HEK293T (cell line): ENCODE measurements at regions of chr14 and their contacts with region 1.

Region 1: DNA sequence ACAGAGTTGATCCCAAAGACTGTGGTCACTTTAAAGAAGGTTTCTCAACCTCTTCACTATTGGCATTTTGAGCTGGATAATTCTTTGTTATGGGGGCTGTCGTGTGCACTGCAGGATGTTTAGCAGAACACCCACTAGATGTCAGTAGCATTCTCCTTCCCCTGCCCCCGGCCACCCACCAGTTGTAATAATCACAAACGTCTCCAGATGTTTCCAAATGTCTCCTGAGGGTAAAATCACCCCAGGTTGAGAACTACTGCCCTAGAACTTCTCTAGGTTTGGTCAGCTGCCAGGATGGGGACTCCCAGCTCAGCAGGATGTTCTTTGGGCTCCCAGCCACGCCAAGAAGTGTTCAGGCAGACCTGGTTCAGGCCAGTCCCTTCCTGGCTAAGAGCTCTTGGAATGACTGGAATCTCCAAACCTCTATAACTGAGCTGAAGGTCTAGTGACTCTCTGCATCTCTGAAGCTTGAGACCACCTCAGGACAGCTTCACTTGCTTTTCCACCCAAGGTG is 12.5 kb upstream of the AJUBA start:
- DNase-seq: peak; percentile 50

Region 2: DNA sequence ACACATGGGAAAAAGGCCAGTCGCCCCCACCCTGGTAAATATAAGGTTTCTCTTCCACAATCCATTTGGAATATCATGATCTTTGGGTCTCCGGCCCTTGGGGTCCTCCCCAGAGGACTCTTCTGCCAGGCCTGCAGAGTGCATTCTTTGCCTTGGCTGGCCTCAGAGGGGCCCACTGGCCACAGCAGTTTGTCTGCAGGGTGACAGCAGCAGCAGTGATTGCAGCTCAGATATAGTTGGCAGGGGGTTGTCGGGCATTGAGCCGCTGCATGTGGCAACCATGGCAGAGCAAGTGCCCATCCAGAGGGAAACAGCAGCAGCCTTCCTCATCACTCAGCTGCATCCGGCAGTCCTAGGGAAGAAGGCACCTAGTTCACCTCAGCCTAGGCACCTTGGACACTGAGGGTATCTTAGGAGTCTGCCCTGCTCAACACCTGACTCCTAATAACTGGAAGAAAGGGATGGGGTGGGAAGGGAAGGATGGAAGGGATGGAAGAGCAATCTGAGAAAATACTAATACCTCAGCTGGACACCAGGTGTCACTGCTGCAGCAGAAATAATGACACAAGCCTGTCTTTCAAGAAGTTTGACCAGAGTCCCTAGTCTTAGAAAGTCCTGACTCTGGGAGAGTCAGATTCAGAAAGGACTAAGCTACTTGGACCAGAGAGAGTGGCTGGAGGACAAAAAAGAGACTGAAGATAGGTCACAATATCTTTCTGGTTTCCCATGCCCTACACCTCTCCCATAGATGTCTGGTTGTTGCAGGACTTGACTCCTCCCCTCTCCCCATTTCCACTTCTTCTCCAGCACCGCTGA is 21.4 kb before region 1 on chr14:
- CTCF ChIA-PET with region 1: interaction called, 13 read pairs
- POLR2A ChIA-PET with region 1: interaction called, 9 read pairs
- DNase-seq: peak; percentile 61

Region 3: GRCh38 chr14:23025151-23025814 is 30.5 kb after region 1 on chr14:
- CTCF ChIA-PET with region 1: interaction called, 10 read pairs
- POLR2A ChIA-PET with region 1: interaction called, 8 read pairs
- DNase-seq: no peak

Region 4: DNA sequence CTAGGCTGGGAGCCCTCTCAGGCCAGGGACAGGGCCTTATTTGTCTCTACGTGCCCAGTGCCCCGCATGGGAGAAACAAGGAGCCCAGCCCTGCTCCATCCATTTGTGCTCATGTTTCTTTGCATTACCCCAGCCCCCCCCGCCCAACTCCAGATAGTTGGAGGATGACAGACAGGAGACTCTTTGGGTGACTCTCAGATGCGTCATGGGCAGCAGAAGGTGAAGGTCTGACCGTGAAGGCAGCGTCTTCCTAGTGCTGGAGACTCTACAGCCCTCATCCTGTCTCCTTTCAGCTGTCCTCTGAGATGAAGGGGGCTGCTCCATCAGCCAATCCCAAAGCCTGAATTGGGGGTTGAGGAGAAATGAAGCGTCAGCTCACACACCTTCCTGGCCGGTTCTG is 46.9 kb after region 1 on chr14:
- CTCF ChIA-PET with region 1: interaction called, 13 read pairs
- POLR2A ChIA-PET with region 1: no interaction called
- DNase-seq: no peak

Region 5: GRCh38 chr14:23057757-23058653 is 63.2 kb after region 1 on chr14:
- CTCF ChIA-PET with region 1: interaction called, 133 read pairs
- POLR2A ChIA-PET with region 1: interaction called, 15 read pairs
- DNase-seq: peak; percentile 87

Region 6: DNA sequence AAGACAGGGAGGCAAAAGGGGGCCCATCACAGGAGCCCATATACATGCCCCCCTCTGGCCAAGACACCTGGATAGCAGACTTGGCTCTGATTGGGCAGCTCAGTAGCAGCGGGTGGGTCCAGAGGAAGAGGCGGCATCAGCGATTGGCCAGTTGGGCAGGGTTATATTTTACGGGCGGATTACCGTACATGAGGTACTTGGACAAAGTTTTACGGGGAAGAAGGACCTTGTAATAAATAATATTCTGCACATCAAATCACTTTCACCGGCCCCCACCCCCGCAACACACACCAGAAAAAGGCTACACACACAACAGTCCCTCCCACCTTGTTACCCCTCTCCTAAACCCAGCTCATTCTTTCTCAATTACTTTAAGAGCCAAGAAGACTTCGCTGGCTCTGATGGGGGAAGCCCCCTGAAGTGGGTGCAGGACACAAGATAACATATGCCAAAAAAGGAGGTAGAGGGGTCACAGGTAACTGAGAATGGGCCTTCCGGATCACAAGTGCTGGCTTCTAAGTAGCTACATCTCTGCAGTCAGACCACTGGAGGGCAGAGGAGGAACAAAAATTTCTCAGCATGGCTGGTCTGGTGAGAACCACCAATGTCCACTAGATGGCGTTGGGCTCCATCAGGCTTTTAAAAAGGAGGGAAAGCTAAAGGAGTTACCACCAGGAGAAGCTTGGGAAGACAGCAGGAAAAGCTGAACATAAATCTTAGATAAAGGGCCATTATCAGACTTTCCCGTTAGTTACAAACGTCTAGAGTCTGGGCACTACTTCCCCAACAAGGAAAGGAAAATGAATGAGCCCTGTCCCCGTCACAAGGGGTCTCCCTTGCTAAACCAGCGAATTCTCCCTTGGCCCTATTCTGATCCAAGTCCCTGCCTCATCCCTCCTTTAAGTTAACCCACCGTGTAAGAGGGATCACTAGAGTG is 73.9 kb after region 1 on chr14:
- CTCF ChIA-PET with region 1: interaction called, 18 read pairs
- POLR2A ChIA-PET with region 1: interaction called, 4 read pairs
- DNase-seq: peak; percentile 83